PC-9 (cell line): ENCODE measurements at regions of chr3 and their contacts with region 1.

Region 1: GRCh38 chr3:49351521-49352011 is 6.6 kb downstream of the GPX1 start:
- DNase-seq: peak; percentile 53 to 88
- H3K4me3 ChIP-seq: no peak overlapping the region; the same call in 1 of the 2 replicates
- H3K27ac ChIP-seq: peak overlapping the region; percentile 81
- H3K4me1 ChIP-seq: peaks cover 69% of the 10 kb centered on the region
- H3K27me3 ChIP-seq: no peaks in the 10 kb centered on the region
- CTCF ChIP-seq: no peak

Region 2: GRCh38 chr3:49397470-49397869 is 45.9 kb after region 1 on chr3:
- CTCF ChIA-PET with region 1: no interaction called
- POLR2A ChIA-PET with region 1: no interaction called
- intact Hi-C with region 1: no loop called
- DNase-seq: no peak
- H3K4me3 ChIP-seq: no peak overlapping the region
- H3K27ac ChIP-seq: no peak overlapping the region
- H3K4me1 ChIP-seq: no peaks in the 10 kb centered on the region
- H3K27me3 ChIP-seq: no peaks in the 10 kb centered on the region
- CTCF ChIP-seq: no peak

Region 3: DNA sequence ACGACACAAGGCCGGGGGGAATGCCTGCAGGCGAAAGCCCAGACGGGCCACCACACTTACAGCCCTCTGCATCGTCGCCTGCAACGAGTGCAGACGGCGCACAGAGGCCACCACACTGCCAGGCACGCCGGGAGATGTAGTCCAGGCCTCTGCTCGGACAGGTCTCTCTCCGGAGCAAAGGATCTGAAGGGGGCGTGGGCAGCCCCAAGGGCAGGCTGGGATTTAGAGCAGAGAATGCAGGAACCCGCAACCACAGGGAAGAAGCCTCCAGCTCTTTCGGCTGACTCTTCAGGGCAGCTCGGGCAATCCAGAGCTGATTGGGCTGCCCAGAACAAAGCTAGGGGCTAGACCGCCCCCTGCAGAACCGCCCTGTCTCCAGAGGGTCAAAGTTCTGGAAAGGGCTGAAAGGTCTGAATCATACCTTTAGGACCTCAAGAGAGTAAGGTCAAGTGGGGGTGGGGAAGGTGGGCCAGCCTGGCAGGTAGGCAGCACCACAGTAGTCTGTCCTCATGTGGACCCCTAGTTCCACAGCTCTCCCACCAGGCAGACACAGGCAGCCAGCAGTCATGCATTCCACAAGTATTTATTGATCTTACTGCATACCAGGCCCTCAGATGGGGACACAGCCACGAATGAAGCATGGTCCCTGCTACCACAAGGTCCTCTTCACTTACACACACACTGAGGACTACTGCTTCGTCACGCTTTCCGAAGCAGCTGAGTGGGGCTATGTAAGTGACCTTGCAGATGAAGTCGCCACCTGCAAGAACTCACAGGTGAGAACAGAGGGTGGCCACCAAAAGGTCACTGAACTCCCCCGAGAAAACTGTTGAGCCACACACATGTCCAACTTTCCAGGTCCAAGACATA is 71.0 kb after region 1 on chr3 and contains the start of gene AMT:
- CTCF ChIA-PET with region 1: no interaction called
- POLR2A ChIA-PET with region 1: no interaction called
- intact Hi-C with region 1: no loop called
- DNase-seq: no peak
- H3K4me3 ChIP-seq: no peak within 1 kb of the TSS
- H3K27ac ChIP-seq: peak within 1 kb of the TSS; percentile 75; the same call in 1 of the 2 replicates
- H3K4me1 ChIP-seq: peaks cover 35% of the 10 kb centered on the region
- H3K27me3 ChIP-seq: no peaks in the 10 kb centered on the region
- CTCF ChIP-seq: no peak
- total RNA-seq, gene AMT: 12.9 and 17.6 TPM in 2 replicates

Region 4: GRCh38 chr3:49484471-49484870 is 132.9 kb after region 1 on chr3:
- CTCF ChIA-PET with region 1: no interaction called
- POLR2A ChIA-PET with region 1: interaction called, 12 read pairs
- intact Hi-C with region 1: no loop called
- DNase-seq: no peak
- H3K4me3 ChIP-seq: no peak overlapping the region
- H3K27ac ChIP-seq: no peak overlapping the region
- H3K4me1 ChIP-seq: peaks cover 4% of the 10 kb centered on the region
- H3K27me3 ChIP-seq: no peaks in the 10 kb centered on the region
- CTCF ChIP-seq: no peak